Heart right ventricle (tissue), 16 donors: ENCODE measurements at regions of chr4 and their contacts with region 1.

Region 1: GRCh38 chr4:16820329-16820728 is 78.1 kb downstream of the LDB2 start:
- DNase-seq: peak in 1 of 2 donors; percentile 45
- ATAC-seq: peak; percentile 69 to 94 (median 82)
- H3K4me3 ChIP-seq: no peak overlapping the region
- H3K27ac ChIP-seq: peak overlapping the region; percentile 0 to 83 (median 56)
- H3K4me1 ChIP-seq: peaks cover 0 to 41% (median 7%) of the 10 kb centered on the region in 9 donors
- H3K27me3 ChIP-seq: no peaks in the 10 kb centered on the region
- CTCF ChIP-seq: no peak

Region 2: GRCh38 chr4:16807355-16807754 is 13.0 kb before region 1 on chr4:
- intact Hi-C with region 1: loop called in 1 of 10 experiments (anchors 1 kb)
- DNase-seq: no peak
- ATAC-seq: no peak
- H3K4me3 ChIP-seq: no peak overlapping the region
- H3K27ac ChIP-seq: peak overlapping the region in 1 of 10 donors; percentile 10
- H3K4me1 ChIP-seq: peaks cover 0 to 10% (median 0%) of the 10 kb centered on the region in 9 donors
- H3K27me3 ChIP-seq: no peaks in the 10 kb centered on the region
- CTCF ChIP-seq: no peak

Region 3: DNA sequence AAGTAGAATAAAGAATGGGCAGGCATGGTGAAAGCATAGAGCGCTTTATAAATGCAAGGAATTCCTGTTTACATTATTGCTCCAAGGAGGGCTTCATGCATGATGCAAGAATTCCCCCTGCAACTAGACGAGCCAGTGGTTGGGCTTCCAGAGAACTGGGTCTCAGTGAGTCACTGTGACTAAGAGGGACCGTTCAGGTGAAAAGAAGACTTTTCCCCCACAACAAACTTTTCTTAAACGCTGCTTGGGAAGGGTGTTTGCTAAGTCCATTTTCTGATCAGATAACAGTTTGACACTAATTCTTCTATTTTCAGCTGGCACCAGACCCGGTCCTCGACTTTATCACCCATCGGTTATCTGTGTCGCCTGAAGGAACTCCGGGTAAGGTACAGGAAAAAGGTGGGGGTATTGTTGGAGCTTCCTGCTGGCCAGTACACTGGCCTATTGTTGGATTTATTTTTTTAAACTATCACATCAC is 38.0 kb after region 1 on chr4:
- intact Hi-C with region 1: loop called in 3 of 10 experiments (anchors 5 kb)
- DNase-seq: peak in 1 of 2 donors; percentile 69
- ATAC-seq: peak; percentile 79 to 94 (median 88)
- H3K4me3 ChIP-seq: no peak overlapping the region
- H3K27ac ChIP-seq: peak overlapping the region; percentile 54 to 86 (median 78)
- H3K4me1 ChIP-seq: peaks cover 4 to 77% (median 24%) of the 10 kb centered on the region in 9 donors
- H3K27me3 ChIP-seq: no peaks in the 10 kb centered on the region
- CTCF ChIP-seq: no peak

Region 4: GRCh38 chr4:16897991-16898827 is 77.9 kb after region 1 on chr4 and contains the start of gene LDB2:
- intact Hi-C with region 1: loop called in 1 of 10 experiments (anchors 10 kb)
- DNase-seq: peak; percentile 65 to 83
- ATAC-seq: peak; percentile 83 to 94 (median 90)
- H3K4me3 ChIP-seq: peak within 1 kb of the TSS; percentile 37 to 69 (median 60)
- H3K27ac ChIP-seq: peak within 1 kb of the TSS; percentile 53 to 86 (median 80)
- H3K4me1 ChIP-seq: peaks cover 0 to 24% (median 9%) of the 10 kb centered on the region in 9 donors
- H3K27me3 ChIP-seq: no peaks in the 10 kb centered on the region
- CTCF ChIP-seq: no peak
- total RNA-seq, gene LDB2: 14.5 to 43.3 (median 23.5) TPM